ENCODE measurements at regions of chr3 and their contacts with region 1.

Region 1: DNA sequence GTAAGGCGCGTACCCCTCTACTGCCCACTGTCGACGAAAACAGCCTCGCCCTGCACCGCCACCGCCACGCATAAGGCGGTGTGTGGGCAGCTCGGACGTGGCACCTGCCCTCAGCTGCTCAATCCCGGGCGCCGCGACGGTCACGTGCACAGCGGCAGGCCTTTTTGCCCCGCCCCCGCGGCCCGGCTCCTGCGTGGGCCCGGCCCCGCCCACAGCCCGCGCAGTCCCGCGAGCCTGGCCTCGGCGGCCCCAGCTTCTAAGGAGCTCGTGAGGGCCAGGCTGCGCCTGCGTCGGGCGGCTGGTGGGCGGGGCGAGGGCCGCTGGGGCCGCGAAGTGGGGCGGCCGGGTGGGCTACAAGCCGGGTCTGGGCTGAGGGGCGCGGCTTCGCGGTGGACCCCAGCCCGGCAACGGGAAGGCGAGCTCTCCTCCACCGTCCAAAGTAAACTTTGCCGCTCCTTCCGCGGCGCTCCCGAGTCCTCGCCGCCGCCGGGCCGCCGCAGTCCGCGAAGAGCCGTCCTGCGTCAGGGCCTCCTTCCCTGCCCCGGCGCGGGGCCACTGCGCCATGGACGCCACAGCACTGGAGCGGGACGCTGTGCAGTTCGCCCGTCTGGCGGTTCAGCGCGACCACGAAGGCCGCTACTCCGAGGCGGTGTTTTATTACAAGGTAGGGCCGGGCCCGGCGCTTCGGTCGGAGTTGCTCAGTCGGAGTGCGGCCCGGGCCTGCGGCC is at the start of gene CAPN7:
- DNase-seq: peak; percentile 97
- ATAC-seq: peak; percentile 90
- H3K4me3 Mint-ChIP-seq: peak within 1 kb of the TSS; percentile 89
- H3K27ac Mint-ChIP-seq: peak within 1 kb of the TSS; percentile 87
- H3K4me1 Mint-ChIP-seq: peaks cover 24% of the 10 kb centered on the region
- H3K27me3 Mint-ChIP-seq: no peaks in the 10 kb centered on the region
- CTCF ChIP-seq: no peak
- total RNA-seq, gene CAPN7: 35.0 and 45.1 TPM in 2 replicates

Region 2: DNA sequence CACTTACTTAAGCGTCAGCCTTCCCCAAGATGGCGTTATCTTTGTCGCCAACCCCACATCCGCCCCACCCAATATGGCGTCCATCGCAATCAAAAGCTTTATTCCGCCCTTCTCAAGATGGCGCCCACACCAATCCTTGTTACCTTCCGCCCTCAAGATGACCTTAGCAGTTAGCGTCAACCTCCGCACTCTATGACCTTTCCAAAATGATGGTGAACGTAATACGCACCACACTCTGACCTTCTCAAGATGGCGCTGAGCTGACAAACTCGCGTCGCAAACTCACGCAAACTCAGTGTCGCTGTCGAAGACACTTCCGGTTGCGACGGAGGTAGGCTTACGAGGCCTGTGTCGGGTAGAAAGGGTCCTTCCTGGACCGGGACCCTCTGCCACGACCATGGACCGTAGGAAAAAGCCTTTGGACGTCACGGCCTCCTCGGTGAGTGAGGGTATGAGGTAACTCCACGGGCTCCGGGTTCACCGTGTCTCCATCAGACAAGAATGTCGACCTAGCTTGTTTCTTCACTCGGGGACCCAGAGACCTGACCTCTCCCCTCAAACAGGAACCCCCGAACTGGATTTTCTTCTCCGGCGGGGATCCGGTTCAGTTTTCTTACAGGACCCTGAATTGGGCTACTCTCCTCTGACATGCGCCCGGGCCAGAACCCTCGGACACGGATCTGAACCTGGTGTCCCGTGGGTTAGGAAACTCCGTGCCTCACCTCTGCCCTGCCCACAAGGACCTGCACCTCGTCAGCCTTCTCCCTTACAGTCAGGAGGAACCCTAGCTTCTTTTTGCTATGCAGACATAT is 554.5 kb before region 1 on chr3 and contains the start of gene CCDC174:
- CTCF ChIA-PET with region 1: no interaction called
- POLR2A ChIA-PET with region 1: interaction called, 4 read pairs
- intact Hi-C with region 1: loop called (anchors 1 kb)
- DNase-seq: peak; percentile 86
- ATAC-seq: peak; percentile 97
- H3K4me3 Mint-ChIP-seq: peak within 1 kb of the TSS; percentile 95
- H3K27ac Mint-ChIP-seq: peak within 1 kb of the TSS; percentile 93
- H3K4me1 Mint-ChIP-seq: peaks cover 34% of the 10 kb centered on the region
- H3K27me3 Mint-ChIP-seq: no peaks in the 10 kb centered on the region
- CTCF ChIP-seq: no peak
- total RNA-seq, gene CCDC174: 30.2 and 32.4 TPM in 2 replicates

Region 3: GRCh38 chr3:15098503-15099363 is 107.4 kb before region 1 on chr3 and contains the start of gene RBSN:
- CTCF ChIA-PET with region 1: no interaction called
- POLR2A ChIA-PET with region 1: interaction called, 8 read pairs
- intact Hi-C with region 1: loop called (anchors 1 kb)
- DNase-seq: peak; percentile 89
- ATAC-seq: peak; percentile 79
- H3K4me3 Mint-ChIP-seq: peak within 1 kb of the TSS; percentile 96
- H3K27ac Mint-ChIP-seq: peak within 1 kb of the TSS; percentile 89
- H3K4me1 Mint-ChIP-seq: peaks cover 27% of the 10 kb centered on the region
- H3K27me3 Mint-ChIP-seq: peaks cover 7% of the 10 kb centered on the region
- CTCF ChIP-seq: no peak
- total RNA-seq, gene RBSN: 19.8 and 29.0 TPM in 2 replicates

Region 4: DNA sequence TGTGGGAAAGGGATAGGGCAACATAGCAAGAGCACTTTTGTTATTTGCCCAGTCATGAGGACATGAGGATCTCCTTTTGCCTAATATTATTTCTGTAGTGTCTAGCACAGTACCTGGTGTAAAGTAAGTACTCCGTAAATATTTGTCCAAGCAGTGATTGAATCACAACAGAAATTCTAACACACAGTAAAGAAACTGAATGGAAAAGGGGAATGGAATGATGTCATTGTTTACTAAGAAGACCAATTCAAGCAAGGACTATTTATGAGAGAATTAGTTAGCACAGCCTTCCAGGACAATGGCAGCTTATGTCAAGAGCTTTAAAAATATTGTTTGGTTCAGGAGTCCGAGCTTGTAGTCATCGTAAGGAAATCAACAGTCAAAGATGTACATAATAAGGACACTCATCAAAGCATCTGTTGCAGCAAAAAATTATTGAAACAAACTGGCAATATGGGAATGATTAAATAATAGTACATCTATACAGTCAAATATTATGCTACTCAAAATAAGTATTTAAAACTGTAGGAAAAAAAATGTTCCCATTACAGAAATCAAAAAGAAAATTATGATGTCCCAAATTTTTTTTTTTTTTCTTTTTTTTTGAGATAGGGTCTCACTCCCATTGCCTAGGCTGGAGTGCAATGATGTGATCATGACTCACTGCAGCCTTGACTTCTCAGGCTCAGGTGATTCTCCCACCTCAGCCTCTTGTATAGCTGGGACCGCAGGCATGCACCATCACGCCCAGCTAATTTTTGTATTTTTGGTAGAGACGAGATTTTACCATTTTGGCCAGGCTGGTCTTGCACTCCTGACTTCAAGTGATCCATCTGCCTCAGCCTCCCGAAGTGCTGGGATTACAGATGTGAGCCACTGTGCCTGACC is 17.8 kb after region 1 on chr3:
- CTCF ChIA-PET with region 1: interaction called, 4 read pairs
- POLR2A ChIA-PET with region 1: interaction called, 3 read pairs
- intact Hi-C with region 1: loop called (anchors 2 kb)
- DNase-seq: no peak
- ATAC-seq: no peak
- H3K4me3 Mint-ChIP-seq: no peak overlapping the region
- H3K27ac Mint-ChIP-seq: no peak overlapping the region
- H3K4me1 Mint-ChIP-seq: no peaks in the 10 kb centered on the region
- H3K27me3 Mint-ChIP-seq: no peaks in the 10 kb centered on the region
- CTCF ChIP-seq: no peak

Region 5: DNA sequence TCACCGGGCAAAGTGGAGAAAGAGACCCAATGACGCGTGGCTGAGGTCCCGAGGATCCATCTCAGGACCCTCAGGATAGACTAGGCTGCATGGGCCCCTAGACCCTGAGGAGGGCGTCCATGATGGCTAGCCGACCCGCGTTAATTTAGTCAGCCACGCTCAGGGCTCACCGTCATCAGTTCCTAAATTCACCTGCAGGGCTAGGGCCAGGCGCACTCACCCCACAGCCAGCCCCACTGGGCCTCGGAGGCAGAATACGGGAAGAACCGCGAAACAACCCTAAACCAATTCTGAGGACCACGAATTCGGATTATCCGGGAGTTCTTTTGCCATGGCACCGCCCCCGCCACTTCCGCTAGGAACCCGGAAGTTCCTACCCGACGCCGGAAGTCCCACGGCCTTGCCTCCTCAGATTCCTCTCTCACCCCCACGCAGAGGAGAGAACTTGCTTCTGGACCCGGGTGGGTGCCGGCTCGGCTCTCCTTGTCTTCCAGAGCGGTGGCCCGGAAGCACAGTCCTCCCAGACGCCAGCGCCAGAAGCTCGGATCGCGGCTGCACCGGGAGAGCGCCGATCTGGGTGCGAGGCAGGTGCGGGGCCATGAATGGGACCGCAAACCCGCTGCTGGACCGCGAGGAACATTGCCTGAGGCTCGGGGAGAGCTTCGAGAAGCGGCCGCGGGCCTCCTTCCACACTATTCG is 221.2 kb after region 1 on chr3 and contains the starts of genes EAF1 and METTL6:
- CTCF ChIA-PET with region 1: interaction called, 6 read pairs
- POLR2A ChIA-PET with region 1: no interaction called
- intact Hi-C with region 1: loop called (anchors 1 kb)
- DNase-seq: peak; percentile 76
- ATAC-seq: peak; percentile 92
- H3K4me3 Mint-ChIP-seq: peak within 1 kb of the TSS; percentile 96
- H3K27ac Mint-ChIP-seq: peak within 1 kb of the TSS; percentile 95
- H3K4me1 Mint-ChIP-seq: peaks cover 50% of the 10 kb centered on the region
- H3K27me3 Mint-ChIP-seq: no peaks in the 10 kb centered on the region
- CTCF ChIP-seq: no peak
- total RNA-seq, gene EAF1: 19.2 and 19.7 TPM in 2 replicates
- total RNA-seq, gene METTL6: 18.7 and 20.2 TPM in 2 replicates

Region 6: GRCh38 chr3:15805756-15806266 is 599.7 kb after region 1 on chr3:
- CTCF ChIA-PET with region 1: interaction called, 14 read pairs
- POLR2A ChIA-PET with region 1: no interaction called
- intact Hi-C with region 1: loop called (anchors 2 kb)
- DNase-seq: no peak
- ATAC-seq: peak; percentile 83
- H3K4me3 Mint-ChIP-seq: peak overlapping the region; percentile 45
- H3K27ac Mint-ChIP-seq: peak overlapping the region; percentile 80
- H3K4me1 Mint-ChIP-seq: peaks cover 60% of the 10 kb centered on the region
- H3K27me3 Mint-ChIP-seq: no peaks in the 10 kb centered on the region
- CTCF ChIP-seq: no peak

Region 7: DNA sequence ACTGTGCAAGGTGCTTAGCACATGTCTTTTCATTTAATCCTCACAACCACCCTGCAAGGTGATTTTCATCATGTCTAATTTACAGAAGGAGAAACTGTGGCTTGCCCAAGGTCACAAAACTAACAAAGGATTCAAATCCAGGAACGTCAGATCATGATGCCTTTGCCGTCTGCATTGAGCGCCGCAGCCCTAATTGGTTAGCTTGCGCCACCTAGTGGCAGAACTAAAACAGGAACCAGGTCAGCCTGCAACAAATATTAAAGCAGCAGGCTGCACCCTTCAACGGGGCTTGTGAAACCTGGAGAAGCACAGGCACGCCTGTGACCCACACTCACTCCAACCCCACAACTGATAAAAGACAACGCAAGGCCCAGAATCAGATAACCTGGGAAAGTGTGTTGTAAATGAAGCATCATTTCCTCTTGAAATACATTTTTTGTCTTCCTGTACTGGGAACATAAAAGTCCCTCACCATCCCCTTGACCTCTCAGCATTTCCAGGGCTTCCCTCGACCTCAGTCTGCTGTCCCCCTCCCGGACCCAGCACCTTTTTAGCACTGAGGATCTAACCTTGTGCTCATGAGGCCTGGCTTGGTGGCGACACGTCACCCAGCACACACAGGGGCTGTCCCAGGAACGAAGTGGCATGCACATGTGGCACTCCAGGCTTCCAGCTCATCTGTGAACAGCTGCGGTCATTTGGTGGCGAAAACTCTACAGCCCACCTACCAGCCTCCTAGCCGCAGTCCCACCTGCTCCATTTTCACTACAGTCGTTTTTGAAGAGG is 1041.4 kb after region 1 on chr3:
- CTCF ChIA-PET with region 1: interaction called, 3 read pairs
- POLR2A ChIA-PET with region 1: no interaction called
- intact Hi-C with region 1: loop called (anchors 1 kb)
- DNase-seq: peak; percentile 43
- ATAC-seq: peak; percentile 90
- H3K4me3 Mint-ChIP-seq: no peak overlapping the region
- H3K27ac Mint-ChIP-seq: no peak overlapping the region
- H3K4me1 Mint-ChIP-seq: peaks cover 18% of the 10 kb centered on the region
- H3K27me3 Mint-ChIP-seq: peaks cover 9% of the 10 kb centered on the region
- CTCF ChIP-seq: peak; percentile 87